ENCODE measurements at regions of chr10 and their contacts with region 1.

Region 1: DNA sequence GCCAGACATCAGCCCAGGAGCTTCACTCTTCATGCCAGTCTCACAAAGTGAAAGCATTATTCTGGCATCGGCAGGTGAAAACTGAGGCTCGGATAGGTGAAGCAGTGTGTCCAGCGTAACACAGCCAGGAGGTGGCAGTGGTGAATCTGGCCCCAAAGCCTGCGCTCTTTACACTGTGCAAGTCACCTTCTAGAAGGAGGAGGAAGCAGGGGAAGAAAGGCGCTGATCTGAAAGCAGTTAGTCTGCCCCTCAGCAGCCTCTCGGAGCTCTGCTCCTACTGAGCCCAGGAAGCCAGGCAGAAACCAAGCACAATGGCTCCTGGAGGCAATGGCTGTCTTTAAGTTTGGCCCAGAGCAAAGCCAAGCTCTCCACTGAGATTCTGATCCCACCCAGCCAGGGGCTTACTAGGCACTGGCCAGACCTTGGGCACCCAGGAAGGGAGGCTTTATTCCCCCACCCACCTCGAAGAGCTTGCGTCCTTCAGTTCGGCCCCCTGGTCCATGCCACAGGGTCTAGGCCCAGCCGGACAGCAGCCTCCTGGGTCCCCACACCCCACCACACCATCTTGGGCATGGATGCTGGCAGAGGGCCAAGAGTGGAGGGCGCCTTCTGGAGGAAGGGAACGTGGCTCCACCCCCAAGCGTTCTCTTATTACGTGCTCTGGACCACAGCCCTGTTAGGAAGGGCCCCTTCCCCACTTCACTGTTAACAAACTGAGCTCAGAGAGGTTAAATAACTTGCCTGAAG is 104.5 kb downstream of the GRID1 start:
- DNase-seq: peak in 5 of 10 donors; percentile 30 to 93 (median 45)

Region 2: DNA sequence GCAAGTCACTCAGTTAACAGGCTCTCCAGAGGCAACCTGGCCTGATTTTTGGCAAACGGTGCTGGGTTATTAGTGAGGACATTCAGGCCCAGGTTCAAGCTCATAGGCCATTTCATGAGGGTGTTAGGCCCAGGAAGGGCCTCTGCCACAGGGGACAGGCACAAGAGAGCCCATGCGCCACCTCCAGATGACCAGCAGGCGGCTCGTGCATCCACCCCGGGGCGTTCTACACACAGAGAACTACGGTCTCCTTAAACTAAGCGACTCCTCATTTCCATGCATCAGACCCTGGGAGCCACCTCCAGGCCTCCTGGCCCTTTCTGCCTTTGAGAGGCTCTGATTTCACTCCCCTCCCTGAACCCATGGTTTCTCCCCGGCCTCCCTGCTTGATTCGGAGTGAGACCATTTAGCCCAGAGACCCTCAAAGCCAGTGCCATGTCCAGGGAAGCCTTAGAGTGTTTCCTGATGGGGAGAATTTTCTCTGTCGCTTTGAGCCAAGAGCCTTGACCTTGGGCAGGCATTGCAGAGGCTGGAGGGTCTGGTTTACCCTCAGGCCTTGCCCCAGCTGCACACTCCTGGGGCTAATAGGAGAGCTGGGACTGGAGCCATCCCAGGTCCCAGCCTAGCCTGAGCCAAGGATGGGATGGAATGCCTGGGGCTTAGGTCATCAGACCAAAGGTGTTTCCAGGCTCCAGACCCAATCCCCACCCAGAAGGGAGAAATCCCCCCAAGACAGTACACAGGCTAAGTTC is 83.5 kb before region 1 on chr10:
- intact Hi-C with region 1: loop called (anchors 2 kb)
- DNase-seq: peak in 4 of 10 donors; percentile 29 to 93 (median 60)

Region 3: GRCh38 chr10:86225103-86225782 is 36.9 kb before region 1 on chr10:
- intact Hi-C with region 1: no loop called
- DNase-seq: peak in 1 of 10 donors; percentile 85

Region 4: DNA sequence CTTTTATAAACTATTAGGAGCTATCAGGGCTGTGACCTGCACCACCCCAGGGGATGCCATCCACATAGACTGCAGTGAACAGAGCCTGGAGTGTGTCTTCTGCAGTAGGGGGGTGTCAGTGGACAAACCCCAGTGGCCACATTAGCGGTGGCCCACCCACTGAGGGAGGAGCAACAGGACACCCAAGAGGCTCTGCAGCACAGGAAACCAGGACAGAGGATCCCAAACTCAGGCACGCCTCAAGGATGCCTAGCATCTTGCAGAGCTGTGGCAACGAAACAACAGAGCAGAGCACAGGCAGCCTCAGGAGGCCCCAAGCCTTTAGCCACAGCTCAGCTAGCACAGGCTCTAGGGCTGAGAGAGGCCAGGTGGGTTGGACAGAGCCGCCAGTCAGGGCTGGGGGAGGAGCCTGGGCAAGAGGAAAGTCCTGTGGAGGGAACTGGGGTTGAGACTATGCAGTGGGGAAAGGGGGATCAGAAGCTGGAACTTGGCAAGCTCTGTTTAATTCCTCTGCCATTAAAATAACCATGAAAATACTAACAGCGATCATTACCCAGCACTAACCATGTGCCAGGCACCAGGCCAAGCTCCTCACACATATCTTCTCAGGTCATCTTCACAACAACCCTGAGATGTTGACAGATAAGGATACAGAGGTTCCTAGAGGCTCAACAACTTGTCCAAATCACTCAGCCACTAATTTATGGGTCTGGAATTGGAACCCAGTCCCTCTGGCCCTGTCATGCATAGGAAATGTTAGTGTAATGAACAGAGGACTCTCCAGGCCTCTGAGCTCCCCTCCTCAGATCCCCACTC is 50.8 kb after region 1 on chr10:
- intact Hi-C with region 1: loop called (anchors 10 kb)
- DNase-seq: peak in 3 of 10 donors; percentile 4 to 83 (median 5)

Region 5: DNA sequence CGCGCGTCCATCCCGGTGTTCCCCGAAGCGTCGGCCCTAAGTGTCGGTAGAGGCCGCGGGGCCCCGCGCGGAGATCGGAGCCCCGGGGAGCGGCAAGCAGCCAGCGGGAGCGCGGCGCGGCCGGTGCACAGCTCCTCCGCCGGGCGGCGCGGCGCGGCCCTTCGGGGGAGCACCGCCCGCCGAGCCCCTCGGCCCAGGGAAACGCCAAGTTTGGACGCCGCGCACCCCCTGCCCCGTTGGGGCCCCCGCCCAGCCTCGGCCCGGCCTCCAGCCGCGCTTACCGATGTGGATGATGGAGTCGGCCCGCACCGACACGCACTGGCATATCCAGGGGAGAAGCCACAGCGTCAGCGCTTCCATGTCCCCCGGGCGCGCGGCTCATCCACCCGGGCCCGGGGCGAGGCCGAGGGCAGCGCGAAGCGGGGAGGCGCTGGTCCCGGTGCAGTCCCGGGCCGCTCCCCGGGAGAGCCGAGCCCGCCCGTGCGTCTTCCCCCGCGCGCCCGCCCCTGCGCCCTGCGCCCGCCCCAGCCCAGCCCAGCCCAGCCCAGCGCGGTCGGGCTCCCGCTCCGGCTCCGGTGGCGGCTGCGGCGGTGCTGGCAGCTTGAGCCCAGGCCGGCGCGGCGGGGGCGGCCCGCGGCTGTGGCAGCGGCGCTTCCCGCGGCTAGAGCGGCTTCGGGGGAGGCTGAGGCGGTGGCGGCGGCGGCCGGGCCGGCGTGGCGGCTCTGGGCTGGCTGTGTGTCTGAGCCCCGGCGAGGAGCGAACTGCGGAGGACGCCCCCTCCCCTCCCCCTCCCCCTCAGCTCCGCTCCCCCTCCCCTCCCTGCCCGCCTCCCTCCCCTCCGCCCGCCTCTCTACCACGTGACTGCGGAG is 104.2 kb after region 1 on chr10 and contains the start of gene GRID1:
- intact Hi-C with region 1: loop called (anchors 2 kb)
- DNase-seq: peak; percentile 65 to 96 (median 72)

Region 6: GRCh38 chr10:86500846-86501245 is 238.7 kb after region 1 on chr10:
- intact Hi-C with region 1: no loop called
- DNase-seq: no peak